Activated B cell treated with CpG ODN at 0.5 μM for 24 hours (primary cell): ENCODE measurements at regions of chr6 and their contacts with region 1.

Region 1: DNA sequence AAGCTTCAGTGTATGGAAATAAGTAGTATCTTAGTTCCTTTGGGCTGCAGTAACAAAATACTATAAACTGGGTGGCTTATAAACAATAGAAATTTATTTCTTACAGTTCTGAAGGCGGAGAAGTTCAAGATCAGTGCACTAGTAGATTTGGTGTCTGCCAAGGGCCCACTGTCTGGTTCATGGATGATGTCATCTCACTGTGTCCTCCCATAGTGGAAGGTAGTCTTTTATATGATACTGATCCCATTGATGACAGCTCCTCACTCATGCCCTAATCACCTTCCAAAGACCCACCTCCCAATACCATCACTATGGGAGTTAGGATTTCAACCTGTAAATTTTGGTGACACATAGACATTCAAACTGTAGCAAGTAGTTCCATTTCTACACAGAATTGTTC is 420.2 kb downstream of the UTRN start:
- DNase-seq: no peak
- ATAC-seq: no peak
- H3K4me3 Mint-ChIP-seq: no peak overlapping the region
- H3K27ac Mint-ChIP-seq: no peak overlapping the region
- H3K4me1 Mint-ChIP-seq: no peaks in the 10 kb centered on the region
- H3K27me3 Mint-ChIP-seq: no peaks in the 10 kb centered on the region
- CTCF ChIP-seq: no peak

Region 2: DNA sequence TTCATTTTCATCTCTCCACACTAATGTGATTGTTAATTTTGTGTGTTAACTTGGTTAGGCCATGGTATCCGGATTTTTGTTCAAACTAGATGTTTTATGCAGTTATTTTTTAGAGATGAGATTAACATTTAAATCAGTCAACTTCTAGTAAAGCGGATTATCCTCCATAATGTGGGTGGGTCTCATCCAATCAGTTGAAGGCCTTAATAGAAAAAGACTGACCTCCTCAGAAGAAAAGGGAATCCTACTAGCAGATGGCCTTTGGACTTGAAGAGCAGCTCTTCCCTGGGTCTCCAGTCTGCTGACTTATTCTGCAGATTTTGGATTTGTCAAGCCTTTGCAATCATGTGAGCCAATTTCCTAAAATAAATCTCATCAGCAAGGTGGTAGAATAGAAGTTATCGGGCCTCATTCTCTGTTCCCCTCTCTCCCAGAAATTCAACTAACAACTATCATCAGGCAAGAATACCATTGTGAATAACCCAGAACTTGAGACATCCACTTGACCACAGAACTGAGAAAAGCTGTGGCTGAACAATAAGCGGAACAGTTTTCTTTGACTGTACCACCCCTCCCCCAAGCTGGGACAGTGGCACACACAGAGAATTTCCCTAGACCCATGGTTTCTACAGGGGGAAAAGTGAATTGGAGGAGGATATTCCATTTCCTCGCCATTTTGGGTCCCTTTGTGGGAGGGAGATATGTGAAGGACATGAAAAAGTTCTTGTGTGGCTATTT is 97.2 kb before region 1 on chr6:
- CTCF ChIA-PET with region 1: no interaction called
- POLR2A ChIA-PET with region 1: no interaction called
- intact Hi-C with region 1: no loop called
- DNase-seq: no peak
- ATAC-seq: no peak
- H3K4me3 Mint-ChIP-seq: no peak overlapping the region
- H3K27ac Mint-ChIP-seq: no peak overlapping the region
- H3K4me1 Mint-ChIP-seq: peaks cover 3% of the 10 kb centered on the region
- H3K27me3 Mint-ChIP-seq: no peaks in the 10 kb centered on the region
- CTCF ChIP-seq: no peak

Region 3: DNA sequence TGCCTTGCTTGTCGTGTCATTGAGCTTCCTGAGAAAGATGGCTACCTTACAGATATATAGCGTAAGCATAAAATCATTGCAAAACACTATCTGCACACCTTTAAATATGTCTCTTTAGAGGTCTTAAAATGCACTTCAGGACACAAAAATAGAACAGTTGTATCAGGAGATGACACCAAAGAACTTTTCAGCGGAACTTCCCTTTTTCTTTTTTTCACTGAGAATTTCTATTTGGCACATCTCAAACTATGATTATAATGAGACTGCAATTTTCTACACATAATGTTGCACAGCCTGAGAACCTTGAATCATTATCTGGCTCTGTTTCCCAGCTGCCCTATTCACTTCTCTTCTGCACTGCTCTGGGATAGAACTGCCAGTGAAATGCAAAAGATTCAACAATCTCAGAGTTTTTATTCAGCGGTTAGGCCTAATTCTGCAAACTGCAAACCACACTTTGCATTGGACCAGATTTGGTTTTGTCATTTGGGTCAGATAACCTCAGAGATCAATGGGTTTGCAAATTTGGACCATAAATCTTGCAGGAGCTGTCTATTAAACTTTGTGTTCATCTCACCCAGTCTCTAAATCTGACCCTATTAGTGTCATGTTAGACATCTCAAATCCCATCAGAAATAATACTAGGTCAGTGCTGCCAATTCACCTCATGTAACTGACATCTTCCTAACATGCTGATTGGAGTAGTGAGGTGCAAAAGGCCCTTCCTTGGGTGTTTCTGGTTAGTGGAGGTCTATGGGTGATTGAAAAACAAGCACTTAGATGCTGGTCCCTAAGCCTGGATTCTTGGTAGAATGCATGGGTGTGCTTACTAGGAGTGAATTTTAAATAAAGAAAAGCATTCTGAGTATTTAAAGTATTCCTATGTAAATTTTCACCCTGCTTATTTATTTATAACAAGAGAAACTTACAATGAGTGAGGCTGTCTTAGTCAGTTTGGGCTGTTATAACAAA is 37.5 kb before region 1 on chr6:
- CTCF ChIA-PET with region 1: no interaction called
- POLR2A ChIA-PET with region 1: no interaction called
- intact Hi-C with region 1: loop called (anchors 5 kb)
- DNase-seq: no peak
- ATAC-seq: peak; percentile 28
- H3K4me3 Mint-ChIP-seq: peak overlapping the region; percentile 33
- H3K27ac Mint-ChIP-seq: peak overlapping the region; percentile 77
- H3K4me1 Mint-ChIP-seq: peaks cover 64% of the 10 kb centered on the region
- H3K27me3 Mint-ChIP-seq: no peaks in the 10 kb centered on the region
- CTCF ChIP-seq: no peak

Region 4: DNA sequence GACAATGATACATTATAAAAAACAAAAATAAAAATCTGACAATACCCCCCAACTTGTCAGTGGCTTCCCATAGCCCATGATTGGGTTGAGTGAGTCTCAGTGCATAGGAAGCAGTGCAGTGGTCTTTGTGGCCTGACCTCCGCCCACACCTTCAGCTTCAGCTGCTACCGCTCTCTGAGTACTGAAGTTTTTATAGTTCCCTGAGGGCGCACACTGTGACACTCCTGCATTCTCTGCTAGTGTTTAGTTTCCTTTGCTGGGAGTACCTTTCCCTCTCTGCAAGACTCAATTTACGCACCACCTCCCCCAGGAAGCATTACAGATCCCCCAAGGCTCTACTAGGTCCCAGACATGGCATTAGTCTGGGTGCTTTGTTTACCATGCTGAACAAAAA is 20.8 kb after region 1 on chr6:
- CTCF ChIA-PET with region 1: no interaction called
- POLR2A ChIA-PET with region 1: no interaction called
- intact Hi-C with region 1: no loop called
- DNase-seq: no peak
- ATAC-seq: peak; percentile 21
- H3K4me3 Mint-ChIP-seq: no peak overlapping the region
- H3K27ac Mint-ChIP-seq: peak overlapping the region; percentile 57
- H3K4me1 Mint-ChIP-seq: peaks cover 32% of the 10 kb centered on the region
- H3K27me3 Mint-ChIP-seq: no peaks in the 10 kb centered on the region
- CTCF ChIP-seq: no peak

Region 5: GRCh38 chr6:144922120-144922722 is 216.9 kb after region 1 on chr6:
- CTCF ChIA-PET with region 1: no interaction called
- POLR2A ChIA-PET with region 1: no interaction called
- intact Hi-C with region 1: no loop called
- DNase-seq: no peak
- ATAC-seq: no peak
- H3K4me3 Mint-ChIP-seq: no peak overlapping the region
- H3K27ac Mint-ChIP-seq: no peak overlapping the region
- H3K4me1 Mint-ChIP-seq: no peaks in the 10 kb centered on the region
- H3K27me3 Mint-ChIP-seq: no peaks in the 10 kb centered on the region
- CTCF ChIP-seq: no peak